ENCODE measurements at regions of chr14 and their contacts with region 1.

Region 1: DNA sequence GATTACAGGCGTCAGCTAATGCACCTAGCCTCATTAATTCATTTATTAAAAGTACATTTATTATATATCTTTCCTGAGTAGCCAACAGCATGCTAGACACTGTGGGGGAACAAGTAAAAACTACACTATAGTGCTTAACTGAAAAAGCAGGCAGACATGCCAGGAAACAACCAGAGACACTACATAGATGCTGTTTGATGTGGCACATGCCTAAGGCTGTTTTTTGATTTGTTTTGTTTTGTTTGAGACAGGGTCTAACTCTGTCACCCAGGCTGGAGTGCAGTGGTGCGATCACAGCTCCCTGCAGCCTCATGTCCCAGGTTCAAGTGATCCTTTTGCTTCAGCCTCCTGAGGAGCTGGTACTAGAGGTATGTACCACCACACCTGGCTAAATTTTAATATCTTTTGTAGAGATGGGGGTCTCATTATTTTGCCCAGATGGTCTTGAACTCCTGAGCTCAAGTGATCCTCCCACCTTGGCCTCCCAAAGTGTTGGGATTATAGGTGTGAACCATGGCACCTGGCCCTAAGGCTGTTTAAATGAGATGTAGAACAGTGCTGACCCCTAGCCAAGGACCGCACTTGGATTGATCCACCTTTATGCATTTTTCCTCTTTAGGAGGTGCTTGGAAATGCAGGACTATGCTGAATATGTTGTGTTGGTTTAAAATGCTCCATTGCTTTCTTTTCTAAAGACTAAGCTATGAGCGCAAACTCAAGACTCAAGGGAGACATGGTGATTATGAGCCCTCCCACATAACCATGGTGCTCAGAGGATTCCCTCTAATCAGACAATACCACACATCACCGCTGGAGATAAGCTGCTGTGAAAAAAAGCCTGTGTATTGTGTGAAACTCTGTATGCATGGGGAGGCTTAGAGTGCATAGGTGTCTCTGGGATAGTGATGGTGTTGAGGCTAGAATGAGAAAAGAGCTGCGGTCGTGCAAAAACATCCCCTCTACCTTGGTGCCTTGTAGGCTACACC is 10.5 kb upstream of the C14orf93 start:
- DNase-seq: no peak
- H3K4me3 ChIP-seq: no peak overlapping the region
- H3K27ac ChIP-seq: no peak overlapping the region
- H3K4me1 ChIP-seq: no peaks in the 10 kb centered on the region
- H3K27me3 ChIP-seq: no peaks in the 10 kb centered on the region
- CTCF ChIP-seq: no peak

Region 2: GRCh38 chr14:22945642-22946041 is 74.8 kb before region 1 on chr14:
- CTCF ChIA-PET with region 1: no interaction called
- POLR2A ChIA-PET with region 1: no interaction called
- intact Hi-C with region 1: no loop called
- DNase-seq: no peak
- H3K4me3 ChIP-seq: no peak overlapping the region
- H3K27ac ChIP-seq: no peak overlapping the region
- H3K4me1 ChIP-seq: no peaks in the 10 kb centered on the region
- H3K27me3 ChIP-seq: no peaks in the 10 kb centered on the region
- CTCF ChIP-seq: no peak

Region 3: GRCh38 chr14:23000860-23001259 is 19.6 kb before region 1 on chr14:
- CTCF ChIA-PET with region 1: interaction called, 18 read pairs
- POLR2A ChIA-PET with region 1: no interaction called
- intact Hi-C with region 1: no loop called
- DNase-seq: no peak
- H3K4me3 ChIP-seq: no peak overlapping the region
- H3K27ac ChIP-seq: no peak overlapping the region
- H3K4me1 ChIP-seq: peaks cover 10% of the 10 kb centered on the region
- H3K27me3 ChIP-seq: no peaks in the 10 kb centered on the region
- CTCF ChIP-seq: no peak

Region 4: GRCh38 chr14:24366721-24367513 is 1346.5 kb after region 1 on chr14:
- CTCF ChIA-PET with region 1: no interaction called
- POLR2A ChIA-PET with region 1: no interaction called
- intact Hi-C with region 1: no loop called
- DNase-seq: peak; percentile 85 to 90
- H3K4me3 ChIP-seq: peak overlapping the region; percentile 66
- H3K27ac ChIP-seq: peak overlapping the region; percentile 68
- H3K4me1 ChIP-seq: peaks cover 7% of the 10 kb centered on the region
- H3K27me3 ChIP-seq: no peaks in the 10 kb centered on the region
- CTCF ChIP-seq: no peak